Tibial artery (tissue), 4 donors: ENCODE measurements at regions of chr18 and their contacts with region 1.

Region 1: DNA sequence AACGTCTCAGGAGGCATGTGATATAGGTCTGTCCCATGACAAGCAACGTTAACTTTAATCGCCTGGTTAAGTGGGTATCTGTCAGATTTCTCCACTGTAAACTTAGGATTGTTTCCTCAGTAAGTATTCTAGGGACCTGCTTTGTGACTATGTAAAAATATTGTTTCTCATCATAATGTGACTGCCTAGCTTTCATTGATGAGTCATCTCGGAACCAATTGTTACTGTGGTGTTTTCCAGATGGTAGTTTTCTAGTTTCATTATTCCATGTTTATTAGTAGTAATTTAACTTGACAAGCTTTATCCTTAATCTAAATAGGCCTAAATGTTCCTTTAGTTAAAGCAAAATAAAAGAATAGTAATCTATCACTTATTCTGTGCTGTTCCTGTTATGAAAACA is 28.2 kb upstream of the GATA6 start:
- DNase-seq: no peak
- H3K4me3 ChIP-seq: no peak overlapping the region
- H3K27ac ChIP-seq: no peak overlapping the region
- H3K4me1 ChIP-seq: no peaks in the 10 kb centered on the region
- H3K27me3 ChIP-seq: no peaks in the 10 kb centered on the region
- CTCF ChIP-seq: no peak

Region 2: GRCh38 chr18:22765896-22766295 is 624.7 kb after region 1 on chr18:
- intact Hi-C with region 1: loop called (anchors 5 kb)
- DNase-seq: no peak
- H3K4me3 ChIP-seq: no peak overlapping the region
- H3K27ac ChIP-seq: no peak overlapping the region
- H3K4me1 ChIP-seq: no peaks in the 10 kb centered on the region
- H3K27me3 ChIP-seq: no peaks in the 10 kb centered on the region
- CTCF ChIP-seq: no peak